Posterior cingulate gyrus (tissue), 11 donors: ENCODE measurements at regions of chr19 and their contacts with region 1.

Region 1: GRCh38 chr19:52048555-52049501 is at the start of gene ZNF432:
- DNase-seq: peak; percentile 88 to 99 (median 90)

Region 2: GRCh38 chr19:51926784-51927742 is 121.8 kb before region 1 on chr19 and contains the start of gene ZNF613:
- intact Hi-C with region 1: loop called (anchors 2 kb)
- DNase-seq: peak; percentile 81 to 98 (median 88)

Region 3: GRCh38 chr19:51986309-51987291 is 62.2 kb before region 1 on chr19 and contains the start of gene ZNF350:
- intact Hi-C with region 1: loop called (anchors 1 kb)
- DNase-seq: peak; percentile 90 to 99 (median 96)

Region 4: GRCh38 chr19:52007806-52008557 is 40.8 kb before region 1 on chr19 and contains the start of gene ZNF615:
- intact Hi-C with region 1: loop called (anchors 5 kb)
- DNase-seq: peak; percentile 89 to 99 (median 94)

Region 5: GRCh38 chr19:52028027-52028779 is 20.6 kb before region 1 on chr19 and contains the start of gene ZNF614:
- intact Hi-C with region 1: loop called (anchors 1 kb)
- DNase-seq: peak; percentile 82 to 98 (median 88)